ENCODE measurements at regions of chr1 and their contacts with region 1.

Region 1: GRCh38 chr1:31193729-31194128 is 46.0 kb downstream of the NKAIN1 start:
- DNase-seq: no peak
- H3K4me3 ChIP-seq: no peak overlapping the region
- H3K27ac ChIP-seq: no peak overlapping the region
- H3K4me1 ChIP-seq: no peaks in the 10 kb centered on the region
- H3K27me3 ChIP-seq: no peaks in the 10 kb centered on the region
- CTCF ChIP-seq: no peak
- POLR2A ChIP-seq: no peak

Region 2: DNA sequence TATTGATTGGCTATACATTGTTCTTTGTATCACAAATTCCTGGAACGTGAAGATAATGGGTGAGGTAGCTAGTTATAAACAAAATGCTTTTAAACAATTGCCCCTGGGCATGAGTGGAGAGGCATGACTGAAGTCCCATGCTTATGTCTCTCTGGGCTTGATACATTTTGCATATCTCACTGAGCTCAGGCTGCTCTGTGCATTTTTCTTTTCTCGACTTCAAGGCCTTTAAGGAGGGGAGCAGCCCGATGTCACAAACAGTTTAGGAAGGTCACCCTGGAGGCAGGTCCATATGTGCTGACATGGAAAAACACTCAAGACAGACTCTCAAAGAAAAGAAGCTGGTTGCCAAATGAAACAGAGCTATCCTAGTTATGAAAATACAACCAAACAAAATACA is 48.1 kb before region 1 on chr1:
- intact Hi-C with region 1: loop called (anchors 2 kb)
- DNase-seq: no peak
- H3K4me3 ChIP-seq: no peak overlapping the region
- H3K27ac ChIP-seq: no peak overlapping the region
- H3K4me1 ChIP-seq: no peaks in the 10 kb centered on the region
- H3K27me3 ChIP-seq: no peaks in the 10 kb centered on the region
- CTCF ChIP-seq: no peak
- POLR2A ChIP-seq: no peak

Region 3: DNA sequence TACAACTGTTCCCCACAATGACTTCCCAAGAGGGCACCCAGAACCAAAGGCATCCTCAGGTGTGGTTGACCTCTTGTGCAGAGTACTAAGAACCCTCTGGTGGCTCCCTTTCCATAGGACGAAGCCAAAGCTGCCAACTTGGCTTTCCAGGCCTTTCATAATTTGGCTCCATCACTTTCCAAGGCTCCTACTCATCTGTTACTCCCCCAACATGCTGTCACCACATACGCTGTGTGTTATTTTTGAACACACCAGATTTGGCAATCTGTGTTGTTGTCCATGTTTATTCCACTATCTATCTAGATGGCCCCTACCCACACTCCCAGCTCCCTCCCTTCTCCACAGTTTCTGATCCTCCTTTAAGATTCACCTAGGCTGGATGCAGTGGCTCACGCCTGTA is 56.1 kb after region 1 on chr1:
- intact Hi-C with region 1: no loop called
- DNase-seq: no peak
- H3K4me3 ChIP-seq: no peak overlapping the region
- H3K27ac ChIP-seq: no peak overlapping the region
- H3K4me1 ChIP-seq: no peaks in the 10 kb centered on the region
- H3K27me3 ChIP-seq: no peaks in the 10 kb centered on the region
- CTCF ChIP-seq: no peak
- POLR2A ChIP-seq: no peak

Measured in breast epithelium (tissue), 4 donors.